HCT116 (cell line): ENCODE measurements at regions of chr9 and their contacts with region 1.

Region 1: GRCh38 chr9:124839612-124840299 is 13.5 kb upstream of the WDR38 start:
- DNase-seq: peak; percentile 33
- ATAC-seq: peak; percentile 65
- H3K4me3 ChIP-seq: no peak overlapping the region
- H3K27ac ChIP-seq: no peak overlapping the region
- H3K4me1 ChIP-seq: peaks cover 26 to 48% of the 10 kb centered on the region in 2 experiments
- H3K27me3 ChIP-seq: no peaks in the 10 kb centered on the region
- CTCF ChIP-seq: peak in 2 of 3 experiments; percentile 66 to 81; a peak in 4 of 6 replicates
- POLR2A ChIP-seq: no peak
- RAD21 ChIP-seq: no peak

Region 2: GRCh38 chr9:124776954-124777665 is 62.6 kb before region 1 on chr9 and contains the start of gene OLFML2A:
- CTCF ChIA-PET with region 1: interaction called, 29 read pairs
- POLR2A ChIA-PET with region 1: no interaction called
- RAD21 ChIA-PET with region 1: no interaction called
- intact Hi-C with region 1: no loop called
- DNase-seq: no peak
- ATAC-seq: peak; percentile 66
- H3K4me3 ChIP-seq: peak within 1 kb of the TSS; percentile 48 to 64
- H3K27ac ChIP-seq: peak within 1 kb of the TSS; percentile 44; the same call in 1 of the 2 replicates
- H3K4me1 ChIP-seq: peaks cover 17 to 40% of the 10 kb centered on the region in 2 experiments
- H3K27me3 ChIP-seq: no peaks in the 10 kb centered on the region
- CTCF ChIP-seq: peak in 2 of 3 experiments; percentile 44 to 53; a peak in 3 of 6 replicates
- POLR2A ChIP-seq: no peak
- RAD21 ChIP-seq: no peak
- total RNA-seq, gene OLFML2A: 6.3 TPM

Region 3: GRCh38 chr9:124812401-124813016 is 27.2 kb before region 1 on chr9:
- CTCF ChIA-PET with region 1: interaction called, 15 read pairs
- POLR2A ChIA-PET with region 1: no interaction called
- RAD21 ChIA-PET with region 1: no interaction called
- intact Hi-C with region 1: no loop called
- DNase-seq: peak; percentile 84
- ATAC-seq: peak; percentile 63
- H3K4me3 ChIP-seq: peak overlapping the region in 1 of 2 experiments; percentile 37; a peak in 2 of 4 replicates
- H3K27ac ChIP-seq: peak overlapping the region; percentile 91
- H3K4me1 ChIP-seq: peaks cover 45 to 61% of the 10 kb centered on the region in 2 experiments
- H3K27me3 ChIP-seq: no peaks in the 10 kb centered on the region
- CTCF ChIP-seq: no peak
- POLR2A ChIP-seq: no peak
- RAD21 ChIP-seq: no peak

Region 4: DNA sequence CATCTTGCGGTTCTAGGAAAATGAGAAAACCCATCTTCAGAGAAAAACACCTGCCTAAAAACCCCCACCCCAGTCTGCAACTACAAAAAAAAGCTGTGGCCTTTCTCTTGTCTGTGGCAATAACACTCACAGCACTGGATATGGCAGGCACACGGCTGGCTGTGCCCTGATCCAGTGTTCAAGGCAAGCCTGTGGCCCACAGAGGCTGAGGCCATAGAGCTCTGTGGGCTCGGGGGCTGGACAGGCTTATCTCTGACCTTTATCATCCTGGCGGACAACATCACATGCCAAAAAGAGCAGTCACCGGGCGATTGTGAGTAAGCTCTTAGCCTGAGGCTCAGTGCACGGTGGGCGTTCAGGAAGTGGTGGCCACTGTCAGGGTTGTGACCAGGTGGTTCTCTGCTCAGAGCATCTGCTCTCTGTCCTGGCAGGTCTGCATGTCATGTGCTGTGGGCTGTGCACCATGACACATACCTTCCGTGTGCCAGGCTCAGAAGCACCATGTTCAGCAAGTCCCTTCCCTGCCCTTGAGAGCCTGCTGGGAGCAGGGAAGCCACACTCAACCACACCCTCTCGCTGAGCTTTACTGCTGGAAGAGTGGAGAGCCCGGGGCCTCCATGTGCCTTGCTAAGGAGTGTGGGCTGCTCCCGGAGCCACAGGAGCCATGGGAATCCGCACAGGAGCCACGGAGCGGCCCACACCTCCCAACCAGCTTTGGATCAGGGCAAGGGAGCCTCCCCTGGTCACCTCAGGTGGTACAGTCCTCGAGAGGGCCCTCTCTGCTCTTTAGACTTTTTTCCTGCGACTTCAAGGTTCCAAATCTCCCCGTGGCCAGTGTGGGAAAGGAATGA is 21.1 kb before region 1 on chr9:
- CTCF ChIA-PET with region 1: interaction called, 15 read pairs
- POLR2A ChIA-PET with region 1: interaction called, 8 read pairs
- RAD21 ChIA-PET with region 1: no interaction called
- intact Hi-C with region 1: no loop called
- DNase-seq: peak; percentile 82
- ATAC-seq: peak; percentile 87
- H3K4me3 ChIP-seq: peak overlapping the region in 1 of 2 experiments; percentile 15; a peak in 1 of 4 replicates
- H3K27ac ChIP-seq: peak overlapping the region; percentile 69
- H3K4me1 ChIP-seq: peaks cover 29 to 61% of the 10 kb centered on the region in 2 experiments
- H3K27me3 ChIP-seq: no peaks in the 10 kb centered on the region
- CTCF ChIP-seq: peak in 1 of 3 experiments; percentile 24; a peak in 2 of 6 replicates
- POLR2A ChIP-seq: no peak
- RAD21 ChIP-seq: no peak